Heart right ventricle (tissue), 16 donors: ENCODE measurements at regions of chr15 and their contacts with region 1.

Region 1: DNA sequence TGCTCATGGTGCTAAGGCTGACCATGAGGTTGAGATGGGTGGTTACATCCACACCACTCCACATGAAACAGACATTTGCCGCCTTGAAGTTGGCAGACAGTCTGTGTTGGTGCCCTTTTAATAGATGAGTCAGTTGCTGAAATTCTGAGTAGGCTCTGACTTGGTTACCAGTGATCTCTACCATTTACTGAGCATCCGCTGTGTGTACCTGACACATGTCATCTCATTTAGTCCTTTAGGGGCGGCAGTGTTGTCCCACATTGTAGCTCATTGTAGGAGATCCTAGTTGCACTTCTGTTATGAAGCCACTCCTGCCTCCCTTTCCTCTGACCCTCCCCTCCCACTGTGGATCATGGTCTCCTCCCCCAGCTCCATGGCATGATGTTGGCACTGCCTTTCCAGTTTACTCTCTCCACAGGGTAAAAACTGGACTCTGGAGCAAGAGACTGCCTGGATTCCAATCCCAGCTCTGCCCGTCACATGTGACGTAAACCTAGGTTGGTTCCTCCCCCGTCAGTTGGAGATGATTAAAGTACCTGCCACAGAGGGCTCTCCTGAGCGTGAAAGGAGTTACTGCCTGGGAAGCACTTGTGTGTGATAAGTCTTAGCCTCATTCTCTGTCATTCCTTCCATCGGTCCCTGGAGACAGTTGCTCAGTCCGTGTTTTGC is 21.6 kb downstream of the SLCO3A1 start:
- DNase-seq: no peak
- ATAC-seq: peak in 2 of 8 donors; percentile 12 to 23
- H3K4me3 ChIP-seq: no peak overlapping the region
- H3K27ac ChIP-seq: no peak overlapping the region
- H3K4me1 ChIP-seq: peaks cover 0 to 49% (median 32%) of the 10 kb centered on the region in 9 donors
- H3K27me3 ChIP-seq: no peaks in the 10 kb centered on the region
- CTCF ChIP-seq: no peak

Region 2: GRCh38 chr15:91469632-91470567 is 405.2 kb before region 1 on chr15:
- intact Hi-C with region 1: no loop called
- DNase-seq: no peak
- ATAC-seq: peak in 1 of 8 donors; percentile 34
- H3K4me3 ChIP-seq: no peak overlapping the region
- H3K27ac ChIP-seq: peak overlapping the region in 1 of 10 donors; percentile 78
- H3K4me1 ChIP-seq: peaks cover 0 to 9% (median 0%) of the 10 kb centered on the region in 9 donors
- H3K27me3 ChIP-seq: no peaks in the 10 kb centered on the region
- CTCF ChIP-seq: no peak

Region 3: GRCh38 chr15:91849749-91850161 is 25.4 kb before region 1 on chr15:
- intact Hi-C with region 1: no loop called
- DNase-seq: no peak
- ATAC-seq: no peak
- H3K4me3 ChIP-seq: no peak overlapping the region
- H3K27ac ChIP-seq: no peak overlapping the region
- H3K4me1 ChIP-seq: peaks cover 0 to 35% (median 23%) of the 10 kb centered on the region in 9 donors
- H3K27me3 ChIP-seq: no peaks in the 10 kb centered on the region
- CTCF ChIP-seq: peak; percentile 25 to 70 (median 59)

Region 4: GRCh38 chr15:91908391-91908790 is 33.3 kb after region 1 on chr15:
- intact Hi-C with region 1: no loop called
- DNase-seq: no peak
- ATAC-seq: no peak
- H3K4me3 ChIP-seq: no peak overlapping the region
- H3K27ac ChIP-seq: no peak overlapping the region
- H3K4me1 ChIP-seq: peaks cover 1 to 39% (median 17%) of the 10 kb centered on the region in 9 donors
- H3K27me3 ChIP-seq: no peaks in the 10 kb centered on the region
- CTCF ChIP-seq: no peak

Region 5: DNA sequence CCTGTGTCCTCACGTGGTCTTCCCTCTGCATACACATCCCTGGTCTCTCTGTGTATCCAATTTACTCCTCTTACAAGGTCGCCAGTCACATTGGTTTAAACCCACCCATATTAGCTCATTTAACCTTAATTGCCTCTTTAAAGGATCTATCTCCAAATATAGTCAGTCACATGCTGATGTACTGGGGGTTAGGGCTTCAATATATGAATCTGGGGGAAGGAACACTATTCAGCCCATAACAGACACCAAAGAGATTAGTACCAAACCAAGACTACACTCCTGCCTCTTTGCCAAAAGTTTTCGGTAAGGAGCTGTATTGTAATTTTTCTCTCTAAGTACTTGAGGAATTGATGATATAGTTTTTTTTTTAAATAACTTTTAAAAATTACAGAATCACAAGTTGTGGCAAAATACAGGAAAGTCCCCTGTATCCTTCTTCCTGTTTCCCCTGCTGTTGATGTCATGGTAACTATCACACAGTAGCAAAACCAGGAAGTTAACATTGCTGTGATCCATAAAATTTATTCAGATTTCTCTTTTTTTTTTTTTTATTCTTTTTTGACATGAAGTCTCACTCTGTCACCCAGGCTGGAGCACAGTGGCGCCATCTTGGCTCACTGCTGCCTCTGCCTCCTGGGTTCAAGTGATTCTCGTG is 46.2 kb after region 1 on chr15:
- intact Hi-C with region 1: loop called in 1 of 10 experiments (anchors 5 kb)
- DNase-seq: no peak
- ATAC-seq: peak in 5 of 8 donors; percentile 21 to 67 (median 34)
- H3K4me3 ChIP-seq: peak overlapping the region in 2 of 10 donors; percentile 9 to 11
- H3K27ac ChIP-seq: peak overlapping the region in 9 of 10 donors; percentile 40 to 82 (median 57)
- H3K4me1 ChIP-seq: peaks cover 27 to 91% (median 85%) of the 10 kb centered on the region in 9 donors
- H3K27me3 ChIP-seq: no peaks in the 10 kb centered on the region
- CTCF ChIP-seq: no peak